ENCODE measurements at regions of chr22 and their contacts with region 1.

Region 1: GRCh38 chr22:29093501-29094300 is 20.9 kb downstream of the KREMEN1 start:
- DNase-seq: no peak
- H3K4me3 ChIP-seq: no peak overlapping the region
- H3K27ac ChIP-seq: no peak overlapping the region
- H3K4me1 ChIP-seq: peaks cover 10% of the 10 kb centered on the region; the same call in 1 of the 2 replicates
- H3K27me3 ChIP-seq: no peaks in the 10 kb centered on the region
- CTCF ChIP-seq: no peak

Region 2: GRCh38 chr22:28360939-28361338 is 732.8 kb before region 1 on chr22:
- CTCF ChIA-PET with region 1: no interaction called
- POLR2A ChIA-PET with region 1: interaction called, 11 read pairs
- intact Hi-C with region 1: no loop called
- DNase-seq: no peak
- H3K4me3 ChIP-seq: no peak overlapping the region
- H3K27ac ChIP-seq: no peak overlapping the region
- H3K4me1 ChIP-seq: no peaks in the 10 kb centered on the region
- H3K27me3 ChIP-seq: no peaks in the 10 kb centered on the region
- CTCF ChIP-seq: no peak

Region 3: DNA sequence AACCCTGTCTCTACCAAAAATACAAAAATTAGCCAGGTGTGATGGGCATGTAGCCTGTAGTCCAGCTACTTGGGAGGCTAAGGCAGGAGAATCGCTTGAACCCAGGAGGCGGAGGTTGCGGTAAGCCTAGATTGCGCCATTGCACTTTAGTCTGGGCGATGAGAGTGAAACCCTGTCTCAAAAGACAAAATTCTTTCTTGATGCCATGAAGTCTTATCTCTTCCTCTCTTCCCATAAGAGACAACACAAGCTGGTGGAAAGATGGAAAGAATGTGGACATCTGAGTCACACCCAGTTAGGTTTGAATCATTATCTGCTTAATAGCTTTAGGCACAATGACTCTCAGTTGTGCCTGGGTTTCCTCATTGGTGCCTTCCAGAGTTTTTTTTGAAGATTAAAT is 14.4 kb after region 1 on chr22:
- CTCF ChIA-PET with region 1: no interaction called
- POLR2A ChIA-PET with region 1: no interaction called
- intact Hi-C with region 1: no loop called
- DNase-seq: peak in 1 of 2 experiments; percentile 52
- H3K4me3 ChIP-seq: no peak overlapping the region
- H3K27ac ChIP-seq: no peak overlapping the region
- H3K4me1 ChIP-seq: peaks cover 14% of the 10 kb centered on the region
- H3K27me3 ChIP-seq: no peaks in the 10 kb centered on the region
- CTCF ChIP-seq: no peak

Measured in PC-9 (cell line).